ENCODE measurements at regions of chrX and their contacts with region 1.

Region 1: DNA sequence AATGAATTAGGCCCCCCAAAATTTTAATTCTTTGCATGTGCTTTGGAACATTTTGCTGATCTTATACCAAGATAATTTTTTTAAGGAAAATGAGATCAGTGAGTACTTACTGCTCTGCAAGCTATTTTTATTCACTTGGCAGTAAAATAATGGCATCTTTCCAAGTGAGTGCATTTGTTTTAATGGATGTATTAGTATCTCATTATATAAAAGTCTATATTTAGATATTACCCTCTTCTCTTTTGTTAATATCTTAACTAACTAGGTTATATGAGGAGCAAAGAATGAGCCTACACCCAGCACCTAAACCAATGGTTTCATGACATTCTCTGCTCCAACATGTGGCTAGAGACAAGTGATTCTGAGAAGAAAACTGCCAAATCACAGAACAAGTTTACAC is 21.1 kb upstream of the ARAF start:
- DNase-seq: no peak
- H3K4me3 ChIP-seq: no peak overlapping the region
- H3K27ac ChIP-seq: no peak overlapping the region
- H3K4me1 ChIP-seq: no peaks in the 10 kb centered on the region
- H3K27me3 ChIP-seq: no peaks in the 10 kb centered on the region
- CTCF ChIP-seq: no peak
- EP300 ChIP-seq: no peak
- POLR2A ChIP-seq: no peak

Region 2: DNA sequence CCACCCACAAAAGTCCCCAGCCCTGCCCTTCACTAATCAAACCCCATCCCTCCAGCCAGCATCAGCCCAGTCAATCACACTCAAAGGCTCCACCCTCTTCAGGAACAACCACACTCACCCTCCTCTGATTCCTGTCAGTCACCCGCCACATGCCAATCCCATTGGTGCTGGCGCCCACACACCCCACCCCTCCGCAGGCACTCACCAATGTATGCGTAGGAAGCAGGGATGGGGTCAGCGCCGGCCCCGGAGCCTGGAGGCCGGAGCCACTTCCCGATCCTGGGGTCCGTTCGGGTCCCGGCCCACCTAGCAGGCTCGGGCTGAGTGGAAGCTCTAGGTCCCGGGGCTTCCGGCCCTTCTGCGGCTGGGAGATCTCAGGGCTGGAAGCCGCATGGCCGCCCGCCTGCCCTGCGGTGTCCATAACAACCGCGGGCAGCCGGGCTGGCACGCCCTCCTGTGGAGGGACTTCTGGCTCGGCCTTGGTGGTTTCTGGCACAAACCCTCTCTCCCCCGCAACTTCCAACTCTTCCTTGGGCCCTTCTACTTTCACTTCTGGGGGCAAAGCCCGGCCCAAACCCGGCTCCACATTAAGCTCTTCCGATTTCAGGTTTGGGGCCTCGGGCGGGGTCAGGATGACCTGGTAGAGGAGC is 97.8 kb after region 1 on chrX:
- intact Hi-C with region 1: loop called in 2 of 4 experiments (anchors 10 kb)
- DNase-seq: peak in 3 of 5 donors; percentile 28 to 66 (median 56)
- H3K4me3 ChIP-seq: no peak overlapping the region
- H3K27ac ChIP-seq: peak overlapping the region in 1 of 2 donors; percentile 27
- H3K4me1 ChIP-seq: no peaks in the 10 kb centered on the region
- H3K27me3 ChIP-seq: no peaks in the 10 kb centered on the region
- CTCF ChIP-seq: no peak
- EP300 ChIP-seq: no peak
- POLR2A ChIP-seq: no peak

Measured in ovary (tissue), 10 donors.